Calu3 (cell line): ENCODE measurements at regions of chr5 and their contacts with region 1.

Region 1: DNA sequence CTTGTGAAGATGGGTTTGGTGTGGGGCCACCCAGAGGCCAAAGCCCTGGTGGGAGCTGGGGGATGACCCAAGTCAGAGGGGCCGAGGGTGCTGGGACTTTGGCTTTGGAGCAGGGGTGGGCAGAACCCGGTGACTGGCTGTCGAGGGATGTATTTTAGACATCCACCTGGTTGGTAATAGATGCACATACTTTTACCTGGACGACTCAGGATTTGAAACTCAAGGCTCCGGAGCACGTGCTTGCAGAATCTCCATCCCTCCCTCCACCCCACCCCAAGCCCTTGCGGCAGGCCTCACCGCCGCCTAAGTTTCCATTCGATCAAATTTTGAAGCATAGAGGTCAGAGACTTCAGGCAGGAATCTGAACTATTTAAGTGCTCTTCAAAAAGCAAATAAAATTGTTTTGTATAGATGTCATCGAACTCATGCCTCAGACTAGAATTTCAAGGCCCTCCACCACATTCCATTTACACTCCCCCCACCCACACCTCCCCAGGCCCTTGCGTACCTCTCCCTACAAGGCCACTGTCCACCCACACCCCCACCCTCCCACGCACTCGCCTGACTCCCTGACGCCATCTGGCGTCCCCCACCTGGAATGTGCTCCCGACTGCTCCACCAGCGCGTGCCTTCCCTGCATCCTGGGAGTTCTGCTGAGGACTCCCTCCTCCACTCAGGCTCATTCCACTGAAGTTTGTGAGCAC is 56.6 kb upstream of the RPL26L1 start:
- DNase-seq: peak; percentile 80
- H3K4me3 Mint-ChIP-seq: no peak overlapping the region
- H3K27ac Mint-ChIP-seq: peak overlapping the region; percentile 98
- H3K4me1 Mint-ChIP-seq: peaks cover 47% of the 10 kb centered on the region
- H3K27me3 Mint-ChIP-seq: no peaks in the 10 kb centered on the region
- CTCF ChIP-seq: no peak

Region 2: GRCh38 chr5:172733131-172733973 is 169.3 kb before region 1 on chr5:
- CTCF ChIA-PET with region 1: interaction called, 6 read pairs
- intact Hi-C with region 1: loop called (anchors 5 kb)
- DNase-seq: peak; percentile 64
- H3K4me3 Mint-ChIP-seq: peak overlapping the region; percentile 1
- H3K27ac Mint-ChIP-seq: peak overlapping the region; percentile 78
- H3K4me1 Mint-ChIP-seq: peaks cover 38% of the 10 kb centered on the region
- H3K27me3 Mint-ChIP-seq: no peaks in the 10 kb centered on the region
- CTCF ChIP-seq: no peak

Region 3: DNA sequence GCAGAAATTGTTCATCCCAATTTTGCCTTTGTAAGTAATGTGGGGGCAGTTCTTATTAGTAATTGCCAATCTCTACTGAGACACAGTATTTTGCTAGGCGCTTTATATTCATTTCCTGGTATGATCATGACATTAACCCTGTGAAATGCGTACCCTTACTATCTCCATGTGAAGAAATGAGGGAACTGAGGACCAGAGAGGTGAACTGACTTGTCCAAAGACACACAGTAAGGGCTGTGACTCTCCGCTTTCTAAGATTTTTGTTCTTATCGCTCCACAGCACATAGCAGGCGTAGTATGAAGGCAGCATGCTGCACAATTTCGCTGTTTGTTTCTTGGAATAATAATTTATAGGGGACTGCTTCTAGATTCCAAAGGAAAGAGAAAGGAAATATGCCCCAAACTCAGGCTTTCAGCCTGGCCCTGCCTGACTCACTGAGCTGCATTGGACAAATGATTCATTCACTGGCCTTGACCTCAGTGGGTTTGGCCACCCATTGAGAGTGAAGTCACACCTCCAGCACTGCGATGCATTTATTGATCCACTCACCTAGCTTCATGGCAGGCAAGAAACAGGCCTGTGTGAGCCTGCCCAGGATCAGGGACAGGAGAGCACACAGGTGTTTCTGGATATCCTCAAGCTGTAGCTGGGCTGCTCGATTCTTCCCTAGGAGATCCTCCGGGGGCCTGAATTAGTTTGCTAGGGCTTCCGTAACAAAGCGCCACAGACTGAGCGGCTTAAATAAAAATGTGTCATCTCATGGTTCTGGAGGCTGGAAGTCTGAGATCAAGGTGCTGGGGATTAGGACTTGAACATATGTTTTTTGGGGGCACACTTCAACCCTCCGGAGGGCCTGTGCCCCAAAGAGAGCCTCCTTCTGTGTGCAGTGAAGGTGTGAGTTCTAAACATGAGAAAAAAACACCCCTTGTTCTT is 124.5 kb before region 1 on chr5:
- CTCF ChIA-PET with region 1: interaction called, 17 read pairs
- intact Hi-C with region 1: no loop called
- DNase-seq: peak; percentile 90
- H3K4me3 Mint-ChIP-seq: peak overlapping the region; percentile 68
- H3K27ac Mint-ChIP-seq: peak overlapping the region; percentile 98
- H3K4me1 Mint-ChIP-seq: peaks cover 51% of the 10 kb centered on the region
- H3K27me3 Mint-ChIP-seq: no peaks in the 10 kb centered on the region
- CTCF ChIP-seq: no peak

Region 4: DNA sequence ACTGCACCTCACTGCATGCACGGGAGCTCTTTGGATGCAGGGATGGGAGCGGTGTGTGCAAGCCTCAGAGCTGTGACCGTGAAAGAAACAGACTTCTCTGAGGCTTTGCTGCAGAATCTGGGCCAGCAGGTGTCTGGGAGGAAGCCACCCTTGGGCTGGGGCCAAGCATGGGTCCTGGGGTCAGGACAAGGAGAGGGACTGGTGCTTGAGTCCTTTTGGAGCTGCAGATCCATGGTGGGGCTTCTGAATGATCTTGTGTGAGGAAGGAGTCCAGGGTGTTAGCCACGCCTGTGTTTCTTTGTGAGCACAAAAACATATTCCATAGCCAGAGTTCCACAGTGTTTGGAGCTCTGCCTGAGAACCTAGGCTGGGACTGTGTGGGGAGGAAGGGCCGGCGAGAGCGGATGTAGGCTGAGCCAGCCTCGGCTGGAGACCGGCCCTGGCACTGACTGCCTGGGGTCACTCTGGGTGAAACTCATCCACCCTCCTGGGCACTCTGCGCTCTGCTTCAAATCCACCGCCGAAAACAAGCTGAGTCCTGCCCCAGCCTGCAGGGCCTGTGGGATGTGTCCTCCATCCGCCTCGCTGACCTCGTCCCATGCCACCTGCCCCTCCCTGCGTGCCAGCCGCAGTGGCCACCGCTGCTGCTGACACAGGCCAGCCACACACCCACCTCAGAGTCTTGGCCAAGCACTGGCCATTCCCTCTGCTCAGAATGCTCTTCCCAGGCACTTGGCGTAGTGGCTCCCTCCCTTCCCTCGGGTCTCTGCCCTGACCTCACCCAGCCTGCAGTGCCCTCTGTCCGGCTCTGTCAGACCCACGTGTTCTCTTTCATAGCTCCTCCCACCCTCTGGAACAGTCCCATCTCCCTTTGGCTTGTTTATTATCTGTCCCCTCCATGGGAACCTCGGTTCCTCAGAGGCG is 41.9 kb before region 1 on chr5:
- CTCF ChIA-PET with region 1: no interaction called
- intact Hi-C with region 1: loop called (anchors 1 kb)
- DNase-seq: no peak
- H3K4me3 Mint-ChIP-seq: peak overlapping the region; percentile 21
- H3K27ac Mint-ChIP-seq: peak overlapping the region; percentile 69
- H3K4me1 Mint-ChIP-seq: peaks cover 63% of the 10 kb centered on the region
- H3K27me3 Mint-ChIP-seq: no peaks in the 10 kb centered on the region
- CTCF ChIP-seq: no peak

Region 5: DNA sequence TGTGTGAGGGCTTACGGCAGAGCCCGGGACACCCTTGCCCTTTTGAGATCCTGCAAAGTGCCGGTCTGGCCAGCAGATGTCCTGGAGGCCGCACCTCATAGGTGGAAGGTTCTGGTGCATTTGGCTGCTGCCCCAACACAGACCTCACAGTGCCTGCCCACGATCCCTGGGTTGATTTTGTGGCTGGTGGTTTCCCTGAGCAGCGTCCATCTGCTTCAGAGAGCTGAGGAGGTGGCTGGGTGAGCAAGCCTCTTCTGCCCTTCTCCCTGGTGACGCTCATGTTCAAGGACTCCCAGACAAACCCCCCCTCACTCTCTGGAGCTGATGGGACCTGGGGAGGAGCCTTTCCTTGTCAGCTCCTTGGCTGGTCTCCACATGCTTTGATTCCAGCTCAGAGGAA is 260.6 kb after region 1 on chr5:
- CTCF ChIA-PET with region 1: no interaction called
- intact Hi-C with region 1: no loop called
- DNase-seq: no peak
- H3K4me3 Mint-ChIP-seq: no peak overlapping the region
- H3K27ac Mint-ChIP-seq: no peak overlapping the region
- H3K4me1 Mint-ChIP-seq: no peaks in the 10 kb centered on the region
- H3K27me3 Mint-ChIP-seq: peaks cover 14% of the 10 kb centered on the region
- CTCF ChIP-seq: no peak